Left cardiac atrium (tissue), 4 donors: ENCODE measurements at regions of chr16 and their contacts with region 1.

Region 1: GRCh38 chr16:17343028-17343427 is 127.7 kb downstream of the XYLT1 start:
- DNase-seq: no peak
- ATAC-seq: peak in 1 of 2 donors; percentile 8

Region 2: GRCh38 chr16:16861546-16861945 is 481.5 kb before region 1 on chr16:
- intact Hi-C with region 1: loop called in 1 of 2 experiments (anchors 10 kb)
- DNase-seq: peak; percentile 32
- ATAC-seq: peak in 1 of 2 donors; percentile 36

Region 3: DNA sequence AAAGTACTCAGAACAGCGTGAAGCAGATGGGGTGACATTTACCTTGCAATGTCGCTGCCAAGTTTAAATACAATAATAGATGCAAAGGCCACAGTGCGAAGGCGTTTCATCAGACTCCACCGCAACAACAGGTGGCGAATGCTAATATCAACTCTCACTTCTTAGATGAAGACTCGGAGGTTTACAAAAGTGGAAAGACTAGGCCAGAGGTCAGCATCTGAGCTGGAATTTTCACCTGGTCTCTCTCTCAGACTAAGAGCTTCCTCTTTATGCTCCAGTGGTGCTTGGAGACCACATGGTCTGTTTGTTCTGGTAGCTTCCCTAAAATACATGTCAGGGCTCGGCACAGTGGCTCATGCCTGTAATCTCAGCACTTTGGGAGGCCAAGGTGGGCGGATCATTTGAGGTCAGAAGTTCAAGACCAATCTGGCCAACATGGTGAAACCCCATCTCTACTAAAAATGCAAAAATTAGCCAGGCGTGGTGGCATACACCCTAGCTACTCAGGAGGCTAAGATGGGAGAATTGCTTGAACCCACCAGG is 41.4 kb before region 1 on chr16:
- intact Hi-C with region 1: loop called in 1 of 2 experiments (anchors 5 kb)
- DNase-seq: no peak
- ATAC-seq: no peak

Region 4: GRCh38 chr16:17397499-17397891 is 54.5 kb after region 1 on chr16:
- intact Hi-C with region 1: loop called in 1 of 2 experiments (anchors 5 kb)
- DNase-seq: peak; percentile 39
- ATAC-seq: peak; percentile 62 to 87